ENCODE measurements at regions of chr6 and their contacts with region 1.

Region 1: GRCh38 chr6:53956068-53956711 is 155.1 kb upstream of the MLIP start:
- DNase-seq: peak; percentile 73 to 86
- H3K4me3 ChIP-seq: no peak overlapping the region
- H3K27ac ChIP-seq: no peak overlapping the region
- H3K4me1 ChIP-seq: no peaks in the 10 kb centered on the region; a peak in 1 of 7 replicates
- H3K27me3 ChIP-seq: no peaks in the 10 kb centered on the region
- CTCF ChIP-seq: peak; percentile 86 to 95 (median 93)
- EP300 ChIP-seq: no peak
- POLR2A ChIP-seq: no peak
- RAD21 ChIP-seq: peak; percentile 98

Region 2: GRCh38 chr6:53734473-53735299 is 221.5 kb before region 1 on chr6:
- CTCF ChIA-PET with region 1: interaction called, 197 read pairs
- POLR2A ChIA-PET with region 1: no interaction called
- DNase-seq: peak; percentile 29 to 78
- H3K4me3 ChIP-seq: no peak overlapping the region
- H3K27ac ChIP-seq: no peak overlapping the region
- H3K4me1 ChIP-seq: peaks cover 0 to 3% (median 0%) of the 10 kb centered on the region in 4 experiments; a peak in 1 of 7 replicates
- H3K27me3 ChIP-seq: no peaks in the 10 kb centered on the region
- CTCF ChIP-seq: peak; percentile 70 to 87 (median 79)
- EP300 ChIP-seq: no peak
- POLR2A ChIP-seq: no peak
- RAD21 ChIP-seq: peak; percentile 55 to 63

Region 3: DNA sequence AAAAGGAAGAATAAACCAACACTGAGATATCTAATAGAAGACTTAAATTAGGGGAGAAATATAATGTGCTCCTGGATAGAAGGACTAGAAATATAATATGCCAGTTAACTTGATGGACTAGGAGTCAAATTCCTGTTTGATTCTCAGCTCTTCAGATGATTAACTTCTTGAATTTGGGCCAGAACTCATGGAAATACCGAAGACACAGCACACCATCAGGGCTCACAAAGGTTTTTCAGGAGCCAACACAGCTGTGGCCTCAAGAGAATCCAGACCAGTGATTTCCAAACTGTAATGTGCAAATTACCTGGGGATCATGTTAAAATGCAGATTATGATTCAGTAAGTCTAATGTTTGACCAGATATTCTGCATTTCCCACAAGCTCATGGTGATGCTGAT is 195.2 kb before region 1 on chr6:
- CTCF ChIA-PET with region 1: interaction called, 11 read pairs
- POLR2A ChIA-PET with region 1: no interaction called
- DNase-seq: no peak
- H3K4me3 ChIP-seq: no peak overlapping the region
- H3K27ac ChIP-seq: no peak overlapping the region
- H3K4me1 ChIP-seq: no peaks in the 10 kb centered on the region
- H3K27me3 ChIP-seq: no peaks in the 10 kb centered on the region
- CTCF ChIP-seq: no peak
- EP300 ChIP-seq: no peak
- POLR2A ChIP-seq: no peak
- RAD21 ChIP-seq: no peak

Region 4: GRCh38 chr6:53794720-53795253 is 161.4 kb before region 1 on chr6 and contains the start of gene LRRC1:
- CTCF ChIA-PET with region 1: interaction called, 52 read pairs
- POLR2A ChIA-PET with region 1: interaction called, 10 read pairs
- DNase-seq: peak; percentile 70 to 99
- H3K4me3 ChIP-seq: peak within 1 kb of the TSS; percentile 68 to 90 (median 88)
- H3K27ac ChIP-seq: peak within 1 kb of the TSS; percentile 50; the same call in 1 of the 2 replicates
- H3K4me1 ChIP-seq: peaks cover 0 to 6% (median 3%) of the 10 kb centered on the region in 4 experiments; a peak in 5 of 7 replicates
- H3K27me3 ChIP-seq: peaks cover 0 to 6% (median 2%) of the 10 kb centered on the region in 4 experiments; a peak in 3 of 7 replicates
- CTCF ChIP-seq: no peak
- EP300 ChIP-seq: 0 out of 3 replicates have a peak, but pooled peaks of 1 of the 2 experiments have one; percentile 4
- POLR2A ChIP-seq: peak in 1 of 2 experiments; percentile 68; a peak in 2 of 3 replicates
- RAD21 ChIP-seq: 0 out of 4 replicates have a peak, but pooled peaks of 1 of the 2 experiments have one; percentile 5
- total RNA-seq, gene LRRC1: 15.9 and 16.2 TPM in 2 replicates

Region 5: GRCh38 chr6:53943395-53943794 is 12.8 kb before region 1 on chr6:
- CTCF ChIA-PET with region 1: interaction called, 16 read pairs
- POLR2A ChIA-PET with region 1: no interaction called
- DNase-seq: no peak
- H3K4me3 ChIP-seq: no peak overlapping the region
- H3K27ac ChIP-seq: no peak overlapping the region
- H3K4me1 ChIP-seq: peaks cover 0 to 2% (median 0%) of the 10 kb centered on the region in 4 experiments; a peak in 1 of 7 replicates
- H3K27me3 ChIP-seq: no peaks in the 10 kb centered on the region
- CTCF ChIP-seq: no peak
- EP300 ChIP-seq: no peak
- POLR2A ChIP-seq: no peak
- RAD21 ChIP-seq: no peak